ENCODE measurements at regions of chr17 and their contacts with region 1.

Region 1: GRCh38 chr17:72407336-72407909 is 286.6 kb downstream of the SOX9 start:
- DNase-seq: peak; percentile 77
- H3K4me3 ChIP-seq: no peak overlapping the region
- H3K27ac ChIP-seq: peak overlapping the region; percentile 55 to 76 (median 66)
- H3K4me1 ChIP-seq: peaks cover 13 to 24% (median 17%) of the 10 kb centered on the region in 4 donors
- H3K27me3 ChIP-seq: no peaks in the 10 kb centered on the region
- CTCF ChIP-seq: no peak
- EP300 ChIP-seq: no peak
- POLR2A ChIP-seq: no peak

Region 2: DNA sequence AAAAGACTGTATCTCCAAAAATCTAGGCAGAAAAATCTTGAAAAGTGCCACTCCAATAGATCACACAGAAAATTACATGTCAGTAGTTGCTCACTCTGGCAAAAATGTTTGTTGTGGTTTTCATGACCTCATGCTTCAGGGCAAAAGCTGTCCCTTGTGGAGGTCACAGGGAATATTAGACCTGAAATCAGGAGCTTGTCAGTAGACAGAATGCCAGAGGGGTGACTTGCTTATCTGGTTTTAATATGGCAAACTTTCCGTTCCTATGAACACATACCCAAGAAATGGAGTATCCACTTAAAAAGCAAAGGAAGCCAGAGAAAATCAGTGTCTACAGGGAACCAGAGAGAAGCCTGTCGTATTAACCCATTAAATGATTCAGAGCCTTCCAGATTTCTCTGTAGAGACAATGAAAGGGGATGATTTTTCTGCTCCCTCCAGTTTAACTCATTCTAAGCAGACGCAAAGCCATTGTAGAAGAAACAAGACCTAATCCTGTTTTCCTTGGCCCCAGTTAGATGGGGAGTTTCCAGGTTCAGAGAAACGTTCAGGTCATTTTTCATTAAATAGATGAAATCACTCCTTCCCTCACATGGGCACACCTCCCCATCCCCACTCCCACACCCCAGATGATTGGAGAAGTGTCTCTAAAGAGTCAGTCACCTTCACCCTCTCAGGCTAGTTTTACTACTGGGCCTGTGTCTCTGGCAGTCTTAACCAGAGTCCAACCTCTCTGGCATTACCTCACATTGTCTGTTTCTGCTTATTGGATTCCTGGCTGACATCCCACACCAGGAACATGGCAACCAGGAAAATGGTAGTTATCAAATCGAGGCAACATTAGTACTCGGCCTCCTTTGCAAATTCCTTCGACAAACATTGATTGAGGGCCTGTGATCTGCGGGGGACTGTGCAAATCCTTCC is 280.6 kb before region 1 on chr17:
- in situ Hi-C with region 1: loop called in 1 of 4 experiments (anchors 25 kb)
- intact Hi-C with region 1: no loop called
- DNase-seq: peak; percentile 39
- H3K4me3 ChIP-seq: no peak overlapping the region
- H3K27ac ChIP-seq: peak overlapping the region; percentile 29 to 87 (median 74)
- H3K4me1 ChIP-seq: peaks cover 0 to 26% (median 15%) of the 10 kb centered on the region in 4 donors
- H3K27me3 ChIP-seq: peaks cover 24% of the 10 kb centered on the region
- CTCF ChIP-seq: no peak
- EP300 ChIP-seq: no peak
- POLR2A ChIP-seq: peak; percentile 22

Measured in transverse colon (tissue), 4 donors.